ENCODE measurements at regions of chr18 and their contacts with region 1.

Region 1: DNA sequence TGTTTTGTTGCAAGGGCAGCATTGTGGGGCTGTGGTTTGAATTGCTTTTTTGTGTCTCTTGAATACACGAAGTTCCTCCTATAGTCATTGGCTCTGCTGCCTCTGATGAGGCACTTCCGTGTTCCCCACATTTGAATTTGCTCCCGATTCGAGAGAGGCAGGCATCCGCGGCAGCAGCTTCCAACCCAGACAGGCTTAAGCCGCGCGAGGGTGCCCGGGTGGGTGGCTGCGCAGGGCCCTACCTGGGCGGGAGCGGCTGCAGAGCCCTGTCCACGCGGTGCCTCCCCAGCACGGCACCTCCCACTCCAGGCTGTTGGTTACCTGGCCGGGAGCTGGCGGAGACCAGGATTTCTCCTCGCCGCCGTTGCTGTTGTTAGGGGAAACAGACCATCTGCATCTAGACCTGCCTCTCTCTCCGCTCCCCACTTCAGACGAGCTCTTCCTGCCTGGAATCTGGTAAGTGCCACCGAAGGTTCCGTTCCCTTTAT is 151.3 kb downstream of the NEDD4L start:
- DNase-seq: peak; percentile 30
- CTCF ChIP-seq: no peak

Region 2: DNA sequence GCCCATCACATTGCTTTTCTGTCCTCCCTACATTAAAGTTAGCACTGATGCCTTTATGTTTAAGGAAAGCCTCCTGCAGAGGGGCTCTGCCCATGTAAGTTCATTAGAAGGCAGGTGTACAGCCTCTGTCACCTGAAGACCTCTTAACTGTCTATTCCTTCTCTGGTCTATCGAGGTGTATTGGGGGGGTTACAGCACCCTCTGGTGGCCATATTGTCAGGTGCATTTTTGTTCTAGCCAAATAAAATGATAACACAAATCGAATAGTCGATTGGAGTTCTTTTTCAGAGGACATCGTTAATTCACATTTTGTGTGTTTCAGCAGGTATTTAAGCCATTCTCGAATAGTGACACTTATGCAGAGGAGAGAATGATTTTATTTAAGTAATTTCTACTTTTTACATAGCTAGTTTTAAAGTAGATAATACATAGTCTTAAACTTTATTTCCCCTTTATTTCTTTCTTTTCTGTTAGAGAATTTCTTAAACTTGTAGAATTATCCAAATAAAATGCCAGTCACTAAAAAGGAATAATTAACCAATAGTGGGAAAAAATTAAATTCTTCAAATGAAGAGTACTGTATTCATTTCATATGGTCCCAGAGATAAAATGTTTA is 14.5 kb before region 1 on chr18:
- CTCF ChIA-PET with region 1: interaction called, 23 read pairs
- POLR2A ChIA-PET with region 1: no interaction called
- DNase-seq: peak; percentile 75
- CTCF ChIP-seq: peak; percentile 82

Measured in GM10248 (cell line).